ENCODE measurements at regions of chr10 and their contacts with region 1.

Region 1: DNA sequence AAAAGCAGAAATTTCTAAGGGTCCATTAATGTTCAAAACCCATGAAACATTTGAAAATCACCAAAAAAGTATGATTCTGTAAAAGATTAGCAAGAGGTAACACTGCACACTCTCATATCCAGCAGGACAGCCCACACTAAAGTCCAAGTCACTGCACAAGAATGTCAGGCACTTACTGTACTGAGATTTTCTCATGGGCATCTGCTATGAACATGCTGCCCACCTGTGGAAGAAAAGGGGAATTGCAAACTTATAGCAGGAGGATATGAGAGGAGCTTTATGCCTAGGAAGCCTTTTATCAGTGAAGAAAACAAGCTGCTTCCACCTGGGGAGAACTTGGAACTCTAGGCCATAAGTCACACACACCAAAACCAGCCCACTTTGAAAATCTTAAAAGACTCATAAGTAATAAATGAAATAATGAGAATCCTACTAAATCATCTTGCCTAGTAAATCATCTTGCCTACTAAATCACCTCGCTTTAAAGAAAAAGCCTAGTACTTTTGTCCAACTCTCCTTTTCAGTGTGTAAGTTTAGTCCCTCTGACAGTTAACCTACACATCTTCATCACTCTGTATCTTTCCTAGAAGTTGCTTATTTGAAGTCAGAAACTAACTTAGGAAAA is 46.1 kb downstream of the ARMH3 start:
- DNase-seq: peak in 7 of 9 experiments; percentile 19 to 72 (median 35)
- ATAC-seq: peak; percentile 94
- H3K4me3 ChIP-seq: no peak overlapping the region
- H3K4me3 Mint-ChIP-seq: no peak overlapping the region
- H3K27ac ChIP-seq: no peak overlapping the region
- H3K27ac Mint-ChIP-seq: no peak overlapping the region
- H3K4me1 ChIP-seq: no peaks in the 10 kb centered on the region
- H3K4me1 Mint-ChIP-seq: peaks cover 2% of the 10 kb centered on the region
- H3K27me3 ChIP-seq: no peaks in the 10 kb centered on the region
- H3K27me3 Mint-ChIP-seq: no peaks in the 10 kb centered on the region
- CTCF ChIP-seq: peak; percentile 82

Region 2: GRCh38 chr10:101602761-101603398 is 407.0 kb before region 1 on chr10:
- CTCF ChIA-PET with region 1: interaction called, 5 read pairs
- POLR2A ChIA-PET with region 1: no interaction called
- intact Hi-C with region 1: loop called in 1 of 2 experiments (anchors 10 kb)
- DNase-seq: peak in 8 of 9 experiments; percentile 26 to 68 (median 48)
- ATAC-seq: peak; percentile 81
- H3K4me3 ChIP-seq: no peak overlapping the region
- H3K4me3 Mint-ChIP-seq: no peak overlapping the region
- H3K27ac ChIP-seq: no peak overlapping the region
- H3K27ac Mint-ChIP-seq: no peak overlapping the region
- H3K4me1 ChIP-seq: no peaks in the 10 kb centered on the region
- H3K4me1 Mint-ChIP-seq: no peaks in the 10 kb centered on the region
- H3K27me3 ChIP-seq: no peaks in the 10 kb centered on the region
- H3K27me3 Mint-ChIP-seq: no peaks in the 10 kb centered on the region
- CTCF ChIP-seq: peak; percentile 75

Region 3: GRCh38 chr10:101840741-101841453 is 169.0 kb before region 1 on chr10:
- CTCF ChIA-PET with region 1: interaction called, 21 read pairs
- POLR2A ChIA-PET with region 1: interaction called, 3 read pairs
- intact Hi-C with region 1: loop called (anchors 1 kb)
- DNase-seq: peak; percentile 39 to 82 (median 72)
- ATAC-seq: peak; percentile 44
- H3K4me3 ChIP-seq: peak overlapping the region; percentile 47 to 48
- H3K4me3 Mint-ChIP-seq: peak overlapping the region; percentile 84
- H3K27ac ChIP-seq: no peak overlapping the region
- H3K27ac Mint-ChIP-seq: no peak overlapping the region
- H3K4me1 ChIP-seq: peaks cover 38% of the 10 kb centered on the region
- H3K4me1 Mint-ChIP-seq: peaks cover 48% of the 10 kb centered on the region
- H3K27me3 ChIP-seq: no peaks in the 10 kb centered on the region
- H3K27me3 Mint-ChIP-seq: peaks cover 8% of the 10 kb centered on the region
- CTCF ChIP-seq: peak; percentile 84

Region 4: GRCh38 chr10:101889256-101890210 is 120.4 kb before region 1 on chr10:
- CTCF ChIA-PET with region 1: interaction called, 31 read pairs
- POLR2A ChIA-PET with region 1: no interaction called
- intact Hi-C with region 1: loop called (anchors 1 to 2 kb)
- DNase-seq: peak; percentile 27 to 73 (median 63)
- ATAC-seq: peak; percentile 76
- H3K4me3 ChIP-seq: no peak overlapping the region
- H3K4me3 Mint-ChIP-seq: no peak overlapping the region
- H3K27ac ChIP-seq: no peak overlapping the region
- H3K27ac Mint-ChIP-seq: no peak overlapping the region
- H3K4me1 ChIP-seq: no peaks in the 10 kb centered on the region
- H3K4me1 Mint-ChIP-seq: no peaks in the 10 kb centered on the region
- H3K27me3 ChIP-seq: no peaks in the 10 kb centered on the region
- H3K27me3 Mint-ChIP-seq: no peaks in the 10 kb centered on the region
- CTCF ChIP-seq: peak; percentile 88

Region 5: GRCh38 chr10:102020938-102021337 is 11.0 kb after region 1 on chr10:
- CTCF ChIA-PET with region 1: interaction called, 15 read pairs
- POLR2A ChIA-PET with region 1: interaction called, 3 read pairs
- intact Hi-C with region 1: no loop called
- DNase-seq: peak in 2 of 9 experiments; percentile 5 to 23
- ATAC-seq: no peak
- H3K4me3 ChIP-seq: no peak overlapping the region
- H3K4me3 Mint-ChIP-seq: no peak overlapping the region
- H3K27ac ChIP-seq: no peak overlapping the region
- H3K27ac Mint-ChIP-seq: no peak overlapping the region
- H3K4me1 ChIP-seq: no peaks in the 10 kb centered on the region
- H3K4me1 Mint-ChIP-seq: peaks cover 4% of the 10 kb centered on the region
- H3K27me3 ChIP-seq: no peaks in the 10 kb centered on the region
- H3K27me3 Mint-ChIP-seq: no peaks in the 10 kb centered on the region
- CTCF ChIP-seq: no peak

Region 6: DNA sequence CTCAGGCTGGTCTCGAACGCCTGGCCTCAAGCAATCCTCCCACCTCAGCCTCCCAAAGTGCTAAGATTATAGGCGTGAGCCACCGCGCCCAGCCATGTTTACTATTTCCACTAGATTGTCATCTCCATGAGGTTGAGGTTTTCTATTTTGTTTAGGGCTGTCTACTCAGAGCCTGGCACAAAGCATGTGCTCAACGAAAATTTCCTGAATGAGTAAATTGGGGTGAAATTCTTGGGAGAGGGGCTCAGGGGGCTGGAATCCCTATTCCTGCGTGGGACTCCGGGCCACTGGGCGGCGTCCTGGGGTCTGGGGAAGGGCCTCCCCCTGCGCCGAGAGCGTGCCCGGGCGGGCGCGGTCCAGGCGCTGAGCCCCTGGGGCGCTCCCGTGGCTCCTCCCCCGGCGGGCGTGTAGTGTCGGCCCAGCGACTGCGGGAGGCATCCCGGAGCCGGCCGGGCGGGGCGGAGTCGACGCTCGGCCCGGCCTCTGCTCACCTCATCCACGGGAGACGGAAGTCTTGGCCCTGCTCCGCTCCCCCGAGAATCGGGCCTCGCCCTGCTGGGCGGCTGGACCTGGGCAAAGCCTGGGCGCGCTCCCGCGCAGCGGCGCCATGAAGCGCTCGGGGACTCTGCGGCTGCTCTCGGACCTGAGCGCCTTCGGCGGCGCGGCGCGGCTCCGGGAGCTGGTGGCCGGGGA is 55.1 kb after region 1 on chr10 and contains the start of gene HPS6:
- CTCF ChIA-PET with region 1: interaction called, 30 read pairs
- POLR2A ChIA-PET with region 1: no interaction called
- intact Hi-C with region 1: no loop called
- DNase-seq: peak; percentile 69 to 94 (median 89)
- ATAC-seq: peak; percentile 98
- H3K4me3 ChIP-seq: peak within 1 kb of the TSS; percentile 57 to 97
- H3K4me3 Mint-ChIP-seq: peak within 1 kb of the TSS; percentile 87
- H3K27ac ChIP-seq: peak within 1 kb of the TSS; percentile 66 to 85
- H3K27ac Mint-ChIP-seq: peak within 1 kb of the TSS; percentile 93
- H3K4me1 ChIP-seq: peaks cover 21% of the 10 kb centered on the region
- H3K4me1 Mint-ChIP-seq: peaks cover 28% of the 10 kb centered on the region
- H3K27me3 ChIP-seq: no peaks in the 10 kb centered on the region
- H3K27me3 Mint-ChIP-seq: no peaks in the 10 kb centered on the region
- CTCF ChIP-seq: no peak
- total RNA-seq, gene HPS6: 17.5 to 18.1 TPM